ENCODE measurements at regions of chr7 and their contacts with region 1.

Region 1: GRCh38 chr7:155951554-155952158 is 139.4 kb upstream of the SHH start:
- DNase-seq: peak; percentile 96
- ATAC-seq: peak; percentile 85
- H3K4me3 ChIP-seq: peak overlapping the region; percentile 41
- H3K27ac ChIP-seq: peak overlapping the region; percentile 97
- H3K4me1 ChIP-seq: peaks cover 44% of the 10 kb centered on the region
- H3K27me3 ChIP-seq: no peaks in the 10 kb centered on the region
- CTCF ChIP-seq: no peak

Region 2: GRCh38 chr7:155844019-155844453 is 107.6 kb before region 1 on chr7:
- CTCF ChIA-PET with region 1: no interaction called
- POLR2A ChIA-PET with region 1: no interaction called
- intact Hi-C with region 1: loop called (anchors 2 kb)
- DNase-seq: peak; percentile 84
- ATAC-seq: peak; percentile 90
- H3K4me3 ChIP-seq: no peak overlapping the region
- H3K27ac ChIP-seq: 0 out of 2 replicates have a peak overlapping the region, but pooled peaks have one; percentile 26
- H3K4me1 ChIP-seq: peaks cover 15% of the 10 kb centered on the region
- H3K27me3 ChIP-seq: no peaks in the 10 kb centered on the region
- CTCF ChIP-seq: peak; percentile 32; the same call in 1 of the 2 replicates

Region 3: GRCh38 chr7:155877123-155877522 is 74.5 kb before region 1 on chr7:
- CTCF ChIA-PET with region 1: no interaction called
- POLR2A ChIA-PET with region 1: no interaction called
- intact Hi-C with region 1: loop called (anchors 2 kb)
- DNase-seq: peak; percentile 59
- ATAC-seq: peak; percentile 88
- H3K4me3 ChIP-seq: no peak overlapping the region
- H3K27ac ChIP-seq: peak overlapping the region; percentile 43; the same call in 1 of the 2 replicates
- H3K4me1 ChIP-seq: peaks cover 16% of the 10 kb centered on the region
- H3K27me3 ChIP-seq: no peaks in the 10 kb centered on the region
- CTCF ChIP-seq: no peak

Region 4: DNA sequence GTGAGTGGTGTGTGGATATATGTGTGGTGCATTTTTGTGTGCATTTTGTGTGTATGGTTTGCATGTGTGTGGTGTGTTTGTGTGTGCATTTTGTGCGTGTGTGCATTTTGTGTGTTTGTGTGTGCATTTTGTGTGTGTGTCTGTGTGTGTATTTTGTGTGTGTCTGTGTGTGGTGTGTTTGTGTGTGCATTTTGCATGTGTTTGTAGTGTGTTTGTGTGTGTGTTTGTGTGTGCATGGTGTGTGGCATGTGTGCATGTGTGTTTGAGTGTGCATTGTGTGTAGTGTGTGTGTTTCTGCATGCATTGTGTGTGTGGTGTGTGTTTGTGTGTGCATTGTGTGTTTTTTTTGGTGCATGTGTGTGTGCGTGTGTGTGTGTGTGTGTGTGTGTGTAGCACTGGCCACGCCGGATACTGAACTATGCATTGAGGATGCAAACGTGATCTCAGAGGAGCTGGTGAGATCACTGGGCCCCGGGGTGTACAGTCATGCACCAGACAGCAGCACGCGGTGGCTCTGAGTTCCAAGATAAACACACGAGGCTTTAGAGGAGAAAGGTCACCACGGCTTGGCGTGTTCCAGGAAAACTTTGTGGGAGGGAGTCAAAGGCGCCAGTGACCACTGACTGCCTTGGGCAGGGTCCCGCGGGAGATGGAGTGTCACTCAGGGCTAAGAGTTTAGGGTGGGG is 32.8 kb before region 1 on chr7:
- CTCF ChIA-PET with region 1: no interaction called
- POLR2A ChIA-PET with region 1: interaction called, 3 read pairs
- intact Hi-C with region 1: loop called (anchors 1 kb)
- DNase-seq: peak; percentile 94
- ATAC-seq: peak; percentile 76
- H3K4me3 ChIP-seq: peak overlapping the region; percentile 7; the same call in 1 of the 2 replicates
- H3K27ac ChIP-seq: peak overlapping the region; percentile 76
- H3K4me1 ChIP-seq: peaks cover 54% of the 10 kb centered on the region
- H3K27me3 ChIP-seq: no peaks in the 10 kb centered on the region
- CTCF ChIP-seq: no peak

Region 5: DNA sequence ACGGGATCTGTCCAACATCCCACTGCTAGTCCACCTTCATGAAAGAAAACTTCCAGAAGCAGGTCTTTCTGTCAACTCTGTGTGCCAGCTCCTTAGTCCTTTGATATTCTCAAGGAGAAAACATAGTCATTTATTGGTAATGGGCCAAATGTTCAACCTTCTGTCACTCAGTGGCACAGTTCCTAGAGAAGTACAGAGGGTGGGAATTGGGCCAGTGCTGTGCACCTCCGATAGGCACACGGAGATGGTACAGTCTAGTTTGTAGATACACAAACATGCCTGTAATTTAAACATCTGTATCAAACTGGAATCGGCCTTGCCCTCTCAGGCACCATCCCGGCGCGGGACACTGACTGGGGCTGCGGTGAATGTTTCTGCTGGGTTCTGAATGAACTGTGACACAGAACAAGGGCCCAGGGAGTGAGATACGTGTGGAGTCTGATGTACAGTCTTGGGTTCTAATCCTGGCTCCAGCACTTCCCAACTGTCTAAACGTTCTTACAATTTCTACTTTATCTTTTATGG is 74.5 kb after region 1 on chr7:
- CTCF ChIA-PET with region 1: no interaction called
- POLR2A ChIA-PET with region 1: no interaction called
- intact Hi-C with region 1: no loop called
- DNase-seq: no peak
- ATAC-seq: no peak
- H3K4me3 ChIP-seq: no peak overlapping the region
- H3K27ac ChIP-seq: no peak overlapping the region
- H3K4me1 ChIP-seq: no peaks in the 10 kb centered on the region
- H3K27me3 ChIP-seq: no peaks in the 10 kb centered on the region
- CTCF ChIP-seq: no peak

Region 6: DNA sequence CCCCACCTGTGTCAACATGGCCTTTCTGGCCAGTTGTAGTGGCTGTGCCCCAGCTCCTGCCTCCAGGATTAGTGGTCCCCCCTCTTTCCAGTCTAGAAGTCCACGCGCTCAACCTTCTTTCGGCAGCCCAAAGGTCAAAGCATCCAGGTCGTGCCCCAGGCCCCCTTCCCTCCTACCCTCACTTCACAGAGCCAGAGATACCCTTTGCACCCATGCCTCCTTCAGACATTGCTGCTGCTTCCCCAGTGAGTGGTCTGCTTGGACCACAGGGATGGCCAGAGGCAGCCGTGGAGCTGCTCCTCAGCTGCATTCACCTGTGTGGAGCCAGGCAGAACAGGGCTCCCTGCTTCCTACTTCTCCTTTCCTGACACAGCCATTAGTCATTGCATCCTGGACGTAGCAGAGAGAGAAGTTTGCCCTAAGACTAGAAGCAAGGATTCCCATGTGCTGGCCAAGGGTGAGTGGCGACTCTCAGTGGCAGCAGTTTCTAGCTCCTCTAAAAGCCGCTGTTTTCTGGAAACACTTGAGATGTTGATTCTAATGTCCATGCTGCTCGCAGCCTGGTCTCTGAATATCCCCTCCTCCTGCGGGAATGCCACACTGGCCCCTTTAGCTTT is 103.7 kb after region 1 on chr7:
- CTCF ChIA-PET with region 1: no interaction called
- POLR2A ChIA-PET with region 1: no interaction called
- intact Hi-C with region 1: loop called (anchors 1 kb)
- DNase-seq: peak; percentile 78
- ATAC-seq: peak; percentile 99
- H3K4me3 ChIP-seq: no peak overlapping the region
- H3K27ac ChIP-seq: no peak overlapping the region
- H3K4me1 ChIP-seq: peaks cover 10% of the 10 kb centered on the region
- H3K27me3 ChIP-seq: no peaks in the 10 kb centered on the region
- CTCF ChIP-seq: peak; percentile 51

Measured in PC-3 (cell line).